ENCODE measurements at regions of chr16 and their contacts with region 1.

Region 1: DNA sequence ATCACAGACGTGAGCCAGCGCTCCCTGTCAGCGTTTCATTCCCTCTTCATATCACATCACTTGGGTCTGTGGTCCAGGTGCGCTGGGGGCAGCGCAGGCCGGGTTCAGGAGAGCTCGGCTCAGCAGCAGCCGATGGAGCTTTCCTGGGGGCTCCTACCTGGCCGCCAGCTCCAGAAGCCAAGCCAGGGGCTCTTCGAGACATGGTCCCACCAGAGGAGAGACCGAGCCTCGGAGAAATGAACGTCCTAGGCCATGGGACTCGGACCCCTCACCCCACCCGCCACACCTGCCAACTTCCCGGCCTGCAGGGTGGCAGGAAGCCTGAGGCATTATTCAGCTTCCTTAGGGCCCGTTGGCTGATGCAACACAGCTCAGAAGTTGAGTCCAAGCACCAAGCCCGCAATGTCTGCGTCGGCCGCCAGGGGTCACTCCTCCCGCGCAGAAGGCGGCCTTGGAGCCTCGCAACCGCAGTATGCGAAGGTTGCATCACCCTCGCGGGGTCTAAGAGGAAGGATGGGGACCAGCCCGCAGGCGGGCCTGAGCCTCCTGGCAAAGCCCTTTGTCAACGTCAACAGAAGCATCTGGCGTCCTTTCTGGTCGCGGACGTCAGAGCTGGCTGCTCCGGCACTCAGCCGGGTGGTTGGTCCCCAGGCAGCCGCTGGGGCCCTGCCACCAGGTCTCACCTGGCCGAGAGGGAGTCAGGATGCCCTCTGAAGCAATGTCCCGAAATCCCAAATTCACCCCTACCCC is 13.2 kb upstream of the KLHDC4 start:
- DNase-seq: peak; percentile 87 to 93
- H3K4me3 ChIP-seq: no peak overlapping the region
- H3K27ac ChIP-seq: no peak overlapping the region
- H3K4me1 ChIP-seq: peaks cover 0 to 17% (median 13%) of the 10 kb centered on the region in 4 donors
- H3K27me3 ChIP-seq: peaks cover 0 to 25% of the 10 kb centered on the region in 2 donors
- CTCF ChIP-seq: peak; percentile 97 to 98

Region 2: GRCh38 chr16:86892509-86892908 is 886.5 kb before region 1 on chr16:
- intact Hi-C with region 1: no loop called
- DNase-seq: no peak
- H3K4me3 ChIP-seq: no peak overlapping the region
- H3K27ac ChIP-seq: no peak overlapping the region
- H3K4me1 ChIP-seq: no peaks in the 10 kb centered on the region
- H3K27me3 ChIP-seq: no peaks in the 10 kb centered on the region
- CTCF ChIP-seq: no peak

Region 3: DNA sequence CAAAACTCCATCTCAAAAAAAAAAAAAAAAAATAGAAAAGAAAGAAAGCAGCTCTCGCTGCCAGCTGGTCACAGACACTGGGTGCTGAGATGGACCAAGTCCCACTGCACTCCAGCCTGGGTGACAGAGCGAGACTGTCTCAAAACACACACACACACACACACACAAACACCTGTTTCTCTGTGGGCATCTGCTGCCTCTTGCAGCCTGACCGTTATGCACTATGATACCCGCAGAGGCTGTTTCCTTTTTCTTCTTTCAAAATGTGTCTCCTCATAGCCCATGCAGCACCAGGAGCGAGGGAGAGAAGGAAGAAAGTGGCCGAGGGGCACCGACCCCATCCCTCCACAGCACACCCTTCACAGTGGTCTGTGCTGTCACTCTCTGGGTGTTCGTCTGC is 23.7 kb after region 1 on chr16:
- intact Hi-C with region 1: no loop called
- DNase-seq: no peak
- H3K4me3 ChIP-seq: no peak overlapping the region
- H3K27ac ChIP-seq: no peak overlapping the region
- H3K4me1 ChIP-seq: peaks cover 0 to 17% (median 15%) of the 10 kb centered on the region in 4 donors
- H3K27me3 ChIP-seq: no peaks in the 10 kb centered on the region
- CTCF ChIP-seq: no peak

Region 4: GRCh38 chr16:87844120-87844733 is 65.2 kb after region 1 on chr16:
- intact Hi-C with region 1: loop called (anchors 10 kb)
- DNase-seq: no peak
- H3K4me3 ChIP-seq: no peak overlapping the region
- H3K27ac ChIP-seq: no peak overlapping the region
- H3K4me1 ChIP-seq: peaks cover 0 to 4% (median 0%) of the 10 kb centered on the region in 4 donors
- H3K27me3 ChIP-seq: peaks cover 0 to 3% of the 10 kb centered on the region in 2 donors
- CTCF ChIP-seq: no peak

Region 5: DNA sequence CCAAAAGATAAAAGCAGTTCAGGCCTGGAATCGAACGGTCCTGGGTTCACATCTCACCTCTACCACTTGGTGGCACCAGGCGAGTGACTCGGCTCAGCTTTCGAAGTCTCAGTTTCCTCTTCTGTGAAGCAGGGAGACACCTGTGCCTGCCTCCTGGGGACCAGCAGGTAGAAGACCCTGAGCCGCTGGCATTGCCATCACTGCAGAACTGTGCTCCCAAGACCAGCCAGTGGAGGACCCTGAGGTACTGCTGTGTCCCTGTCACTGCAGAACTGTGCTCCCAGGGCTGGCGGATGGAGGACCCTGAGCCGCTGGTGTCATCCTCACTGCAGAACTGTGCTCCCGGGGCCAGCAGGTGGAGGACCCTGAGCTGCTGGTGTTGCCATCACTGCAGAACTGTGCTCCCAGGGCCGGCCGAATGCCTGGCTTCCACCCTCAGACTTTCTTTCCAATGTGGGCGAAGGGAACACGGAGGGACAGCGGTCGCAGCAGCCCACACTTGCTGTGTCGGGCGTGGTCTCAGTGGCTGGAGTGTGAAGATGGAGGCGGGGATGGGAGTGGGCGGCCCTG is 99.0 kb after region 1 on chr16:
- intact Hi-C with region 1: loop called (anchors 5 kb)
- DNase-seq: no peak
- H3K4me3 ChIP-seq: no peak overlapping the region
- H3K27ac ChIP-seq: no peak overlapping the region
- H3K4me1 ChIP-seq: no peaks in the 10 kb centered on the region
- H3K27me3 ChIP-seq: peaks cover 0 to 65% of the 10 kb centered on the region in 2 donors
- CTCF ChIP-seq: no peak

Region 6: DNA sequence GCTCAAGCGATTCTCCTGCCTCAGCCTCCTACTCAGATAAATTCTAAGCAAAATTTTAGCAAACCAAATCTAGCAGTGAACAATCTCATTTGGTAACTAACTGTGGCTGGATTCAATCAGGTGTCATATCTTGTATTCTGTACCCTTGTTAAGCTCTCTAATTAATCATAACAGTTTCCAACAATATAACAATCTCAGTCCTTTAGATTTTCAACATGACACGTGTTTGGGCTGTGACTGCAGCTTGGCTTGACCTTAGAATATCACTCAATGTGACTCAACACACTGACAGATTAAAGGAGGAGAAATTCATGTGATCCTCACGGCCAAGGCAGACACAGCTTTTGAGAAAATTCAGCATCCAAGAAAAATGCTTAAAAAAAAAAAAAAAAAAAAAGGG is 305.9 kb after region 1 on chr16:
- intact Hi-C with region 1: no loop called
- DNase-seq: peak in 1 of 2 donors; percentile 56
- H3K4me3 ChIP-seq: no peak overlapping the region
- H3K27ac ChIP-seq: no peak overlapping the region
- H3K4me1 ChIP-seq: peaks cover 0 to 3% (median 0%) of the 10 kb centered on the region in 4 donors
- H3K27me3 ChIP-seq: peaks cover 0 to 10% of the 10 kb centered on the region in 2 donors
- CTCF ChIP-seq: no peak

Measured in tibial artery (tissue), 4 donors.